K562 (cell line): ENCODE measurements at regions of chr20 and their contacts with region 1.

Region 1: GRCh38 chr20:50133474-50134217 is 19.9 kb downstream of the PEDS1 start:
- DNase-seq: no peak
- ATAC-seq: no peak
- H3K4me3 ChIP-seq: no peak overlapping the region
- H3K27ac ChIP-seq: no peak overlapping the region
- H3K4me1 ChIP-seq: peaks cover 4 to 27% of the 10 kb centered on the region in 2 experiments; a peak in 4 of 5 replicates
- H3K27me3 ChIP-seq: no peaks in the 10 kb centered on the region
- CTCF ChIP-seq: 0 out of 6 replicates have a peak, but pooled peaks of 2 of the 3 experiments have one; percentile 10 to 28
- EP300 ChIP-seq: no peak
- POLR2A ChIP-seq: no peak
- RAD21 ChIP-seq: no peak

Region 2: GRCh38 chr20:49534255-49534712 is 599.4 kb before region 1 on chr20:
- CTCF ChIA-PET with region 1: no interaction called
- POLR2A ChIA-PET with region 1: no interaction called
- in situ Hi-C with region 1: no loop called
- intact Hi-C with region 1: no loop called
- DNase-seq: peak; percentile 67 to 81 (median 73)
- ATAC-seq: peak; percentile 91
- H3K4me3 ChIP-seq: no peak overlapping the region
- H3K27ac ChIP-seq: no peak overlapping the region
- H3K4me1 ChIP-seq: no peaks in the 10 kb centered on the region
- H3K27me3 ChIP-seq: peaks cover 8 to 12% of the 10 kb centered on the region in 2 experiments; a peak in 3 of 5 replicates
- CTCF ChIP-seq: peak; percentile 79 to 83 (median 80)
- EP300 ChIP-seq: no peak
- POLR2A ChIP-seq: no peak
- RAD21 ChIP-seq: peak; percentile 38 to 76

Region 3: GRCh38 chr20:50120897-50121693 is 12.6 kb before region 1 on chr20:
- CTCF ChIA-PET with region 1: no interaction called
- POLR2A ChIA-PET with region 1: interaction called, 24 read pairs
- in situ Hi-C with region 1: no loop called
- intact Hi-C with region 1: no loop called
- DNase-seq: peak in 1 of 4 experiments; percentile 37
- ATAC-seq: peak; percentile 58
- H3K4me3 ChIP-seq: no peak overlapping the region
- H3K27ac ChIP-seq: no peak overlapping the region
- H3K4me1 ChIP-seq: peaks cover 4 to 7% of the 10 kb centered on the region in 2 experiments; a peak in 3 of 5 replicates
- H3K27me3 ChIP-seq: no peaks in the 10 kb centered on the region
- CTCF ChIP-seq: peak; percentile 62 to 68 (median 66)
- EP300 ChIP-seq: no peak
- POLR2A ChIP-seq: no peak
- RAD21 ChIP-seq: peak; percentile 35 to 69; a peak in 3 of 4 replicates